AG04450 (cell line): ENCODE measurements at regions of chr1 and their contacts with region 1.

Region 1: GRCh38 chr1:7042322-7043190 is 257.3 kb downstream of the CAMTA1 start:
- DNase-seq: no peak
- H3K4me3 ChIP-seq: no peak overlapping the region
- H3K27ac ChIP-seq: no peak overlapping the region
- H3K27me3 ChIP-seq: peaks cover 4% of the 10 kb centered on the region
- CTCF ChIP-seq: peak; percentile 62

Region 2: DNA sequence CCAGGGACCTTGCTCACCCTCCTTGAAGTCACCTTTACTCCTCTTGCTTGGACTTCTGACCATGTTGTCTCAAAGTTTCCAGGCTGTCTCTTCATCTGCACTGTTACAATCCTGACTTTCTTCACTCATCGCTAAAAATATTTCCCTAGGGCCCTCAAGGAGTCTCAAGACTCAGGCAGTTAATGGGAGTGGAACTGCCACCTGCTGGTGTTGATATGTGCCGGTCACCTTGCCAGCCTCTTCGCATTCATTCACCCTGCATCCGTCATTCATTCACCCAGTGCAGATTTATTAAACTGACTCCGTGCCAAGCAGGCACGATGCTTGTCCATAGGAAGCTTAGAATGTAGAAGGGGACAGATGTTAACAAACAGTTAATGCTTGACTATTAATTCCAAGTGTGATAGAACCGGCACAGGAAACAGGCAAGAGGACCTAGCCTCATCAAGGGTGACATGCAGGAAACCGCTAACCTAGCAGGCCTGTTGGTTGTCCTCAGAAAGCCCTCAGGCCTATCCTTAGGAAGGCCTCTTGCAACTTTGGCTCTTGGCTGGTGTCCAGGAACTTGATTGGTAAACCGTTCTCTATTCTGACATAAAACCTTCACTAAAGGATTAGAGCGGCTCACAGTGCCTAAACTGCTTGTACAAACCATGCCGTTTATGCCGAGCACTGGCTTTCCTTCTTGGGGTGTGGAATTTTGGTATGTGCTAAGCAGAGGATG is 84.9 kb after region 1 on chr1:
- CTCF ChIA-PET with region 1: no interaction called
- POLR2A ChIA-PET with region 1: no interaction called
- DNase-seq: no peak
- H3K4me3 ChIP-seq: no peak overlapping the region
- H3K27ac ChIP-seq: no peak overlapping the region
- H3K27me3 ChIP-seq: peaks cover 17% of the 10 kb centered on the region
- CTCF ChIP-seq: no peak

Region 3: DNA sequence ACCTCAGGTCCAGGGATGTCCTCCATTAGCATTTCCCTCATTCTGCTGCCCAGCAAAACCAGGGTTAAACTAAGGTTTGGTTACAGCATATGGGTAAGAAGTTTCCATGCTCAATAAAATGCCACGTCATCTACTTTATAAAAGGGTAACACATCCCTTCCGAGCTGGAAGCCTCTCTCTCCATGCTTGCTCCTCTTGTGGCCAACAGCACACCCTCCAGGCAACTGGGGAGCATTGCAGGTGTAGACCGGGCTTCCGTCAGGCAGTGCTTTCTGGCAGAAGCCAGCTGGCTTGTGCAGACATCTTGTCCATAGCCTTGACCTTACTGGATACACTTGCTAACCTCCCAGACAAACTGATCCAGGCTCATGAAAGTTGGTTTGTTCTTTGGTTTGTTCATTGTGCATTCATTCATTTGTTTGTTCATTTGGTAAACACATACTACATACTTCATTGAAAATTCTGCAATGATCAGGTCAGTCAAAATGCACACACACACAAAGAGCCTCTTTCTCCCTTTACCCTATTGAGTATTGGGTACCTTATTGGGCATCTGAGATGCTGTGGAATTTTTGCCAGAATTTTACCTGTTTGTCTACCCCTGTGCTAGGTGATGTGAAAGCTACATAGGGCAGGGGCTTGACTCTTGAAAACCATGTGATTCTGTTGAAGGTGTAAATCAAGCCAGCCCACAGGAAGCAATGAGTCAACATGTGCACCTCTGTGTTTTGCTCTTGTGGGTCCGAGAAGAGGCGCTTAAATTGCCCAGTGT is 165.5 kb after region 1 on chr1:
- CTCF ChIA-PET with region 1: interaction called, 15 read pairs
- POLR2A ChIA-PET with region 1: no interaction called
- DNase-seq: no peak
- H3K4me3 ChIP-seq: no peak overlapping the region
- H3K27ac ChIP-seq: peak overlapping the region; percentile 11
- H3K27me3 ChIP-seq: no peaks in the 10 kb centered on the region
- CTCF ChIP-seq: peak; percentile 63

Region 4: GRCh38 chr1:7218210-7218832 is 175.8 kb after region 1 on chr1:
- CTCF ChIA-PET with region 1: interaction called, 13 read pairs
- POLR2A ChIA-PET with region 1: no interaction called
- DNase-seq: no peak
- H3K4me3 ChIP-seq: no peak overlapping the region
- H3K27ac ChIP-seq: no peak overlapping the region
- H3K27me3 ChIP-seq: no peaks in the 10 kb centered on the region
- CTCF ChIP-seq: peak; percentile 77

Region 5: GRCh38 chr1:7281821-7282220 is 239.3 kb after region 1 on chr1:
- CTCF ChIA-PET with region 1: no interaction called
- POLR2A ChIA-PET with region 1: no interaction called
- DNase-seq: peak; percentile 75
- H3K4me3 ChIP-seq: no peak overlapping the region
- H3K27ac ChIP-seq: no peak overlapping the region
- H3K27me3 ChIP-seq: no peaks in the 10 kb centered on the region
- CTCF ChIP-seq: no peak

Region 6: GRCh38 chr1:7326347-7326746 is 283.8 kb after region 1 on chr1:
- CTCF ChIA-PET with region 1: no interaction called
- POLR2A ChIA-PET with region 1: no interaction called
- DNase-seq: no peak
- H3K4me3 ChIP-seq: no peak overlapping the region
- H3K27ac ChIP-seq: no peak overlapping the region
- H3K27me3 ChIP-seq: no peaks in the 10 kb centered on the region
- CTCF ChIP-seq: no peak

Region 7: GRCh38 chr1:7646981-7647901 is 604.7 kb after region 1 on chr1:
- CTCF ChIA-PET with region 1: interaction called, 54 read pairs
- POLR2A ChIA-PET with region 1: no interaction called
- DNase-seq: no peak
- H3K4me3 ChIP-seq: no peak overlapping the region
- H3K27ac ChIP-seq: no peak overlapping the region
- H3K27me3 ChIP-seq: peaks cover 2% of the 10 kb centered on the region
- CTCF ChIP-seq: peak; percentile 93